Endothelial cell of umbilical vein (primary cell): ENCODE measurements at regions of chr2 and their contacts with region 1.

Region 1: DNA sequence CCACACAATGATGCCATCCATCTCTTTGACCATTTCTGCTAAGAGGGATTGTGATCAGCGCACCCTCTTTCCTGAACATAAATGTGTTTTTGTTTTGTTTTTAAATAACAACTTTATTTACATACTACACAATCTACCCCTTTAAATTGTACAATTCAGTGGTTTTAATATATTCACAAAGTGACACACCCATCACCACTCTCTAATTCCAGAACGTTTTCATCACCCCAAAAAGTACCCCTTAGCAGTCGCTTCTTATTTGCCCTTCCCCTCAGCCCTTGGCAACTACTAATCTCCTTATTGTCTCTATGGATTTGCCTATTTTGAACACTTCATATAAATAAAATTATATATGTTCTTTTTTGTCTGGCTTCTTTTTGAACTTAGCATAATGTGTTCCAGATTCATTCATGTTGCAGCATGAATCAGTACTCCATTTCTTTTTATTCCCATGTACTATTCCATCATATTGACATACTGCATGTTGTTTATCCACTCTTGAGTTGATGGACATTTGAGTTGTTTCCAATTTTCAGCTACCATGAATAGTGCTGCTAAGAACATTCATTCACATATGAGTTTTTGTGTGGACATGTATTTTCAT is 150.9 kb upstream of the NABP1 start:
- DNase-seq: no peak
- H3K4me3 ChIP-seq: no peak overlapping the region
- H3K27ac ChIP-seq: no peak overlapping the region
- H3K4me1 ChIP-seq: no peaks in the 10 kb centered on the region
- H3K27me3 ChIP-seq: peaks cover 2% of the 10 kb centered on the region in 2 experiments
- CTCF ChIP-seq: no peak
- POLR2A ChIP-seq: no peak

Region 2: DNA sequence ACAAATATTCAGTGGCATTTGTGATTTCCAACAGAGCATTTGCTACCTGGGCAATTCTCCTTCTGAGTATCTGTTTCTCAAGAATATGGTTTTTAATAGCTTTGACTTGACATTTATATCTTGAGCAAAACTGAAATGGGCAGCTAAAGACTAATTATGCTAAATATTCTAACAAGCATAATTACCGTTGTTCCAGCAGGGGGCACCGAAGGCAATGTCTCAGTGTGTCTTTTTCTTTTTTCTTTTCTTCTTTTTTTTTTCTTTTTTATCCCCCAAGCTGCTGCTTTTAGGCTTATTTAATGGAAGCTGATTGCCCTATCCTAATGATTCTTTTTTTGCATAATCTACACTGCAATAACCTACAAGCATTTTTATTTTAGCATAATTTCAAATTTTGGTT is 12.0 kb after region 1 on chr2:
- CTCF ChIA-PET with region 1: interaction called, 10 read pairs
- POLR2A ChIA-PET with region 1: no interaction called
- dilution Hi-C with region 1: no loop called
- intact Hi-C with region 1: no loop called
- DNase-seq: peak; percentile 44
- H3K4me3 ChIP-seq: no peak overlapping the region
- H3K27ac ChIP-seq: no peak overlapping the region
- H3K4me1 ChIP-seq: no peaks in the 10 kb centered on the region
- H3K27me3 ChIP-seq: peaks cover 9% of the 10 kb centered on the region in 2 experiments
- CTCF ChIP-seq: peak; percentile 37 to 56
- POLR2A ChIP-seq: no peak